ENCODE measurements at regions of chr17 and their contacts with region 1.

Region 1: DNA sequence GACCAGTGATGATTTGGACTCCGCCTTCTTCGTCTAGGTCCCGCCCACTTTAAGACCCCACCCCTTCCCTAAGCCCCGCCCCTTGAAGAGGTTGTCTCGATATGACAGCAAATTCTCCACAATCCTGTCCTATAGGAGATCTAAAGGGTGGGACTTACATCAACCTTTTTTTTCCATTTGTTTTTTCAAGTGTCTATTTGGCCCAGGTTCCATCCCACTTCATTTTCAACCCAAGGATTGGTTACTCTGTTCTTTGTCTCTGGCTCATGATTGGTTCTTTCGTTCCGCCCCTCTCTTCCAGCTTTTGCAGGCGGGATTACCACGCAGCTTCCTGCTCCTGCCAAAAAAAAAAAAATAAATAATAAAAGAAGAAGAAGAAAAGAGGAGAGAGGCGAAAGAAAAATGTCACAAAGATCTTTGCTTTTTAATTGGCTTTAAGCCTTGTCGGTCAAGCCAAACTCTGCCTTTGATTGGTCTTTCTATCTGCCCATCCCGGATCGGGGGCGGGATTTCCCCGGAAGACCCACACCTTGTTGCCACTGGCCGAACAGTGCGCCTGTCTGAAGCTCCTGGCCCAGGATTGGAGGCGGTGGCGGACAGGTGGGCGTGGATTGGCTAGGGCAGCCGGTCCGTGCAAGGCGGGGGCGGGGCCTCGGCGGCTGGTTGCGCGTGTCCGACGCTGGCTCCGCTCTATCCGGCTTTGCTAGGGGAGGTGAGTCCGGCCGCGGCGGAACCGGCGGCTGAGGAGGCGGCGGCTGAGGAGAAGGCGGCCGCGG is 1.2 kb upstream of the NLK start:
- DNase-seq: peak; percentile 100
- H3K4me3 Mint-ChIP-seq: peak overlapping the region; percentile 80
- H3K27ac Mint-ChIP-seq: peak overlapping the region; percentile 76
- H3K4me1 Mint-ChIP-seq: peaks cover 48% of the 10 kb centered on the region
- H3K27me3 Mint-ChIP-seq: peaks cover 9% of the 10 kb centered on the region

Region 2: DNA sequence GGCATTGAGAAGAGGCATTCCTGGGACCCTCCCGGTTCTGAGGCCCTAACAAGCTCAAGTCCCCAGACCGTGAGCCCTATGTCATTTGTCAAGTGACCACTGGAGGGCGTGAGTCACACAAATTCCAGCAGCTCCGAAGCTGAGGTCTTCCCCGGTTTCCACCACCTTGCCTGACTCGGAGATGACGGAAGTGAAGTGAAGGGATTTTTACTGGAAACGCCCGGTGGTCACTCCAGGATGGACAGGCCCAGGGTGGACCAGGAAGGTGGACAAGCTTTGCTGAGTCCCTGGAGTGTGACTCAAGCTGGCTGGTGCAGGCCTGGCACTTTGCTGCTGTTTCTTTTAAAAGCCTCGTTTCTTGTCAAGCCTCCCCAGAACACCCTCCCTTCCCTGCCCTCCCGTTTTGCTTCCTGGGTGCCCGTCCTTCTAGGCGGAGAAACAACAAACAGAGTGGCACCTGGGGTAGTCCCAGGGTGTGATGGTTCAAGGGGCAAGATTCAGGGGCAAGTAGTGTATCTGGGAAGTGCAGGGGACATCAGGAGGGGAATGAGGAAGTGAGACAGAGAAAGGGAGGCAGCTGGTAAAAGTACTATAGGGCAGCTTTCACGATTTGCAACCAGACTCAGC is 235.6 kb before region 1 on chr17:
- intact Hi-C with region 1: loop called (anchors 2 kb)
- DNase-seq: peak; percentile 76
- H3K4me3 Mint-ChIP-seq: peak overlapping the region; percentile 28
- H3K27ac Mint-ChIP-seq: peak overlapping the region; percentile 84
- H3K4me1 Mint-ChIP-seq: peaks cover 40% of the 10 kb centered on the region
- H3K27me3 Mint-ChIP-seq: no peaks in the 10 kb centered on the region

Region 3: DNA sequence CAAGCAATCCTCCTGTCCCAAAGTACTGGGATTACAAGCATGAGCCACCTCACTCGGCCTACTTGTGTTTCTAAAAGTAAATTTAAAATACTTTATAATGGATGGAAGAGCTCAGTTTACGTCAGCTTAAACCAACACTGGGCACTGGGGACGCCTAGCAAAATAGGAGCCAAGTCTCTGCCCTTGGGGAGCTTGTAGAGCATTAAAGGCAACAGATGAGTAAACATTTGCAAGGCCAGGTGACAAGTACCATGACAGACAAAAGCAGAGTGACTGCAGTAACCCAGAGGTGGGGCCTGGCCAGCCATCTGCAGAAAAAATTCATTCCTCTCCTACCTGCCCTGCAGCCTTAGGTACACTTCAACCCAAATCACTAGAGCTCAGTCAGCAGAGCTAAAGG is 10.9 kb before region 1 on chr17:
- intact Hi-C with region 1: no loop called
- DNase-seq: no peak
- H3K4me3 Mint-ChIP-seq: no peak overlapping the region
- H3K27ac Mint-ChIP-seq: no peak overlapping the region
- H3K4me1 Mint-ChIP-seq: peaks cover 3% of the 10 kb centered on the region
- H3K27me3 Mint-ChIP-seq: peaks cover 16% of the 10 kb centered on the region

Region 4: GRCh38 chr17:28057731-28058279 is 16.5 kb after region 1 on chr17:
- intact Hi-C with region 1: loop called (anchors 1 kb)
- DNase-seq: no peak
- H3K4me3 Mint-ChIP-seq: no peak overlapping the region
- H3K27ac Mint-ChIP-seq: peak overlapping the region; percentile 71
- H3K4me1 Mint-ChIP-seq: peaks cover 30% of the 10 kb centered on the region
- H3K27me3 Mint-ChIP-seq: no peaks in the 10 kb centered on the region

Region 5: GRCh38 chr17:28097901-28098300 is 56.6 kb after region 1 on chr17:
- intact Hi-C with region 1: no loop called
- DNase-seq: no peak
- H3K4me3 Mint-ChIP-seq: no peak overlapping the region
- H3K27ac Mint-ChIP-seq: no peak overlapping the region
- H3K4me1 Mint-ChIP-seq: no peaks in the 10 kb centered on the region
- H3K27me3 Mint-ChIP-seq: peaks cover 2% of the 10 kb centered on the region

Region 6: GRCh38 chr17:28178800-28179199 is 137.5 kb after region 1 on chr17:
- intact Hi-C with region 1: loop called (anchors 5 kb)
- DNase-seq: no peak
- H3K4me3 Mint-ChIP-seq: no peak overlapping the region
- H3K27ac Mint-ChIP-seq: no peak overlapping the region
- H3K4me1 Mint-ChIP-seq: peaks cover 26% of the 10 kb centered on the region
- H3K27me3 Mint-ChIP-seq: no peaks in the 10 kb centered on the region

Region 7: GRCh38 chr17:28335201-28335955 is 294.1 kb after region 1 on chr17 and contains the starts of genes IFT20 and TNFAIP1:
- intact Hi-C with region 1: loop called (anchors 10 kb)
- DNase-seq: peak; percentile 98
- H3K4me3 Mint-ChIP-seq: peak within 1 kb of the TSS; percentile 97
- H3K27ac Mint-ChIP-seq: peak within 1 kb of the TSS; percentile 89
- H3K4me1 Mint-ChIP-seq: peaks cover 29% of the 10 kb centered on the region
- H3K27me3 Mint-ChIP-seq: no peaks in the 10 kb centered on the region
- total RNA-seq, gene IFT20: 21.1 and 24.1 TPM in 2 replicates
- total RNA-seq, gene TNFAIP1: 31.3 and 32.3 TPM in 2 replicates

Measured in activated T-helper 2 cell treated with anti-CD3 and anti-CD28 coated beads, Interferon-gamma antibody, Interleukin-2, Interleukin-4, amounts not matched to agents 10 μg/mL and 5 μg/mL and 100 μg/mL, durations not matched to agents 14 hours and 24 hours and 36 hours (primary cell).